ENCODE measurements at regions of chr5 and their contacts with region 1.

Region 1: DNA sequence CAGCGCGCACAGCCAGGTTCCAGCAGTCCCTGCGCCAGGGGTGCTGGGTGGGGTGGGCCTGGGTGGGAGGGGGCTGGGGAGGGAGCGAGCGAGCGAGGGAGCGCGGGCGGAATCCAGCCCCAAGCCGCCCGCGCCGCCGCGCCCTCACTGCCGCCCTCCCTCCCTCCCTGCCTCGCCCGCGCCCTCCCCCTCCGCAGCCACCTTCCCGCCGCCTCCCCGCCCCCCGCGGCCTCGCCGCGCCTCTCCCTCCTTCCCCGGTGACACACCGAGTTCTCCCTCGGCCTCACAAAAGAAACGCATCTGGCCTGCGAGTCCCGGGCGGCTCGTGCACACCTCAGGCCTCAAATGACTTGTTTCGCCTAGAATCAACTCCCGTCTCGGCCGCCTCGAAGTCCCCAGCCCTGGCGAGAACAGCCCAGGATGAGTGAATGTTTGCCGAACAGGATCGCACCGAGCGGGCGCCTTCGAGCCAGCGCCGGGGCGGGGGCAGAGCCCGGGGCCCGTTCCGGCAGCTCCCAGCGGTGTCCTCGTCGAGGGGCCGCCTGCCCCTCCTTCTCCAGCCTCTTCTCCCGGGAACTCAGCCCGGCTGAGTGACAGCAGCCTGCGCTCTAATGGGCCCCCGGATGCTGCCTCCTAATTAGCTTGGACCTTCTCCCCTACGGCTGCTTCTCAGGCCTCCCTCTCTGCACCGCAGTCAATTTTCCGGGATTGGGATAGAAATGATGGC is 371 bp upstream of the PITX1 start:
- DNase-seq: peak; percentile 93 to 96 (median 94)
- ATAC-seq: peak; percentile 84
- H3K4me3 ChIP-seq: peak overlapping the region; percentile 99
- H3K27ac ChIP-seq: peak overlapping the region; percentile 98
- H3K4me1 ChIP-seq: peaks cover 19 to 45% of the 10 kb centered on the region in 2 experiments
- H3K27me3 ChIP-seq: no peaks in the 10 kb centered on the region
- CTCF ChIP-seq: no peak
- EP300 ChIP-seq: no peak
- POLR2A ChIP-seq: peak; percentile 80
- RAD21 ChIP-seq: no peak

Region 2: DNA sequence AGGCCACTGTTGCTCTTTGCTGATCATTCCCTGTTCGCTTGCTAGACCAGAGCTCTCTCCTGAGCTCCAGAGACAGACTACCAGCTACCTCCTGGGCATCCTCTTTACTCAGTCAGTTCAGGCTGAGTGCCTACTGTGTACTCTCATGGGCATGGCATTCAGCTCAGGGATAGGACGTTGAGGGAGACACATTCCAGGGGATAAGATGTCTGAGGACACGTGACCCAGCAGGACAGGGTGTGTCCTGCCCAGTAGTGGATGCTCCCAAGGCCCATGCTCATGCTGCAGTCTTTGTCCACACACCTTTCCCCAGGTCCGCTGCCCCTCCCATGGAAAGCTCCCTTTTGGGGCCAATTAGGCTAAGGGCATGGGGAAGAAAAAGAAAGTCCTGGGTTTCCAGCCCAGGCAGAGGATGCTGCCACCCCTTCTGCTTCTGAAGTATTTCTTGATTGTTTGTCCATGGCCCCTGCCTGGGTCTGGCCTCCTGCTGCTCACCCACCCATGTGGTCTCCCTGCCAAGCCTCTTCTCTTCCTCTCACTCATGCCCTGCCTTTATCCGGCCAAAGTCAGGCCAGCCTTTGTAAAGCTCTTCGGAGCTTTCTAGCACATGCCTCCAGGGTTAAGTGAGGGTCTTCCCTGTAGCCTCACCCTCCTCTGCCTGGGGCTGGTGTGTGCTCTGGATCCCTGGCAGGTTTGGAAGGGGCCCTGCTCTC is 60.1 kb after region 1 on chr5:
- CTCF ChIA-PET with region 1: no interaction called
- POLR2A ChIA-PET with region 1: no interaction called
- in situ Hi-C with region 1: no loop called
- intact Hi-C with region 1: loop called (anchors 5 kb)
- DNase-seq: no peak
- ATAC-seq: no peak; the same call in 2 of the 3 replicates
- H3K4me3 ChIP-seq: no peak overlapping the region
- H3K27ac ChIP-seq: no peak overlapping the region
- H3K4me1 ChIP-seq: peaks cover 8 to 10% of the 10 kb centered on the region in 2 experiments; a peak in 3 of 5 replicates
- H3K27me3 ChIP-seq: no peaks in the 10 kb centered on the region
- CTCF ChIP-seq: no peak
- EP300 ChIP-seq: no peak
- POLR2A ChIP-seq: no peak
- RAD21 ChIP-seq: no peak

Region 3: GRCh38 chr5:135303582-135304173 is 269.3 kb after region 1 on chr5:
- CTCF ChIA-PET with region 1: no interaction called
- POLR2A ChIA-PET with region 1: no interaction called
- in situ Hi-C with region 1: no loop called
- intact Hi-C with region 1: no loop called
- DNase-seq: peak in 1 of 4 experiments; percentile 40
- ATAC-seq: peak; percentile 77
- H3K4me3 ChIP-seq: peak overlapping the region; percentile 7; the same call in 1 of the 2 replicates
- H3K27ac ChIP-seq: peak overlapping the region; percentile 39; the same call in 2 of the 3 replicates
- H3K4me1 ChIP-seq: peaks cover 14 to 21% of the 10 kb centered on the region in 2 experiments
- H3K27me3 ChIP-seq: no peaks in the 10 kb centered on the region
- CTCF ChIP-seq: no peak
- EP300 ChIP-seq: no peak
- POLR2A ChIP-seq: no peak
- RAD21 ChIP-seq: no peak

Measured in K562 (cell line).